ENCODE measurements at regions of chr15 and their contacts with region 1.

Region 1: GRCh38 chr15:66931768-66932633 is 133.4 kb upstream of the SMAD3 start:
- DNase-seq: peak; percentile 83
- ATAC-seq: peak; percentile 97
- H3K4me3 ChIP-seq: peak overlapping the region in 1 of 2 experiments; percentile 23; a peak in 2 of 4 replicates
- H3K27ac ChIP-seq: peak overlapping the region; percentile 100
- H3K4me1 ChIP-seq: peaks cover 39% of the 10 kb centered on the region
- H3K27me3 ChIP-seq: no peaks in the 10 kb centered on the region
- CTCF ChIP-seq: no peak

Region 2: GRCh38 chr15:66830358-66830757 is 101.6 kb before region 1 on chr15:
- CTCF ChIA-PET with region 1: no interaction called
- POLR2A ChIA-PET with region 1: no interaction called
- in situ Hi-C with region 1: no loop called
- intact Hi-C with region 1: no loop called
- DNase-seq: no peak
- ATAC-seq: peak; percentile 83
- H3K4me3 ChIP-seq: no peak overlapping the region
- H3K27ac ChIP-seq: peak overlapping the region; percentile 64
- H3K4me1 ChIP-seq: peaks cover 9% of the 10 kb centered on the region
- H3K27me3 ChIP-seq: no peaks in the 10 kb centered on the region
- CTCF ChIP-seq: no peak

Region 3: DNA sequence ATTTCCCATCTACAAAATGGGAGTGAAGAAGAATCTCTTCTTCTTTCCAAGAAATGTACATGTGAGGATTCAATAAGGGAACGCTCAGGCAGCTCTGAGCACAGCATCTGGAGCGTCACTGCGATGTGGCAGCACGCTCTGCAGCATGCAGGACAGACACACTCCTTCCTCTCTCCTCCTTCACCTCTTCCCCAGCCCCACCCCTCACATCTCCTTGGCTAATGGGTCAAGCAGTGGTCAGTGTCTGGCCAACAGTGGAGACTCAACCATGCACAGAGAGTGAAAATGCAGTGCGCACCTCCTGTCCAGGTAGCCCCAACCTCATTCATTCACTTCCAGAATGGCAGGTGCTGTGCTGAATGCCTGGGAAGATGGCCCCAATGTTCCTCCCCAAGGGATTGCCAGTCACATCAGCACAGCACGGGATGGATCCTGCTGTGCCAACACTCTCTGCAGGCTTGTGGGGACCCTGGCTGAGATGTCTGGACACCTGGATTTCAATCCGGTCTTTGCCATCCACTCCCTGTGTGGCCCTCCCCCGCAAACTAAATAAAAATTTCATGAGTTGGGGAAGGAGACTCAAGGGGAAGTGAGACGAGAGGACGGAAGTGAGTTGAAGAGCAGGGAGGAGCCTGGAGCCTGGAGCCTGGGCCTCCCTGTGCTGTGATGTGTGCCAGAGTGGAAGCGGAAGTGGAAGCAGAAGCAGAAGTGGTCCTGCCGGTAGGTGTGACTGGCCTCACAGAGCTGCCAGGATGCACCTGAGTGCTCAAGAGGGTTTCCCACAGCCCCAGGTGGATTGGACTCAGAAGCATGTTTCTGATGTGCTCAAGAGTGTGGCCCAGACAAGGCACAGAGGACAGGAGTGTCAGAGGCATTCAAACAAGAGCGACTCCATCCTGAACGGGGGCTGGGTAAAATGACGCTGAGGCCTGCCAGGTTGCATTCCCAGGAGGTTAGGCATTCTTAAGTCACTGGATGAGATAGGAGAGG is 66.1 kb before region 1 on chr15:
- CTCF ChIA-PET with region 1: no interaction called
- POLR2A ChIA-PET with region 1: no interaction called
- in situ Hi-C with region 1: no loop called
- intact Hi-C with region 1: no loop called
- DNase-seq: no peak
- ATAC-seq: no peak
- H3K4me3 ChIP-seq: no peak overlapping the region
- H3K27ac ChIP-seq: peak overlapping the region; percentile 90
- H3K4me1 ChIP-seq: peaks cover 34% of the 10 kb centered on the region
- H3K27me3 ChIP-seq: no peaks in the 10 kb centered on the region
- CTCF ChIP-seq: no peak

Region 4: GRCh38 chr15:66883322-66883911 is 48.6 kb before region 1 on chr15:
- CTCF ChIA-PET with region 1: no interaction called
- POLR2A ChIA-PET with region 1: interaction called, 3 read pairs
- in situ Hi-C with region 1: no loop called
- intact Hi-C with region 1: loop called (anchors 5 kb)
- DNase-seq: peak; percentile 99
- ATAC-seq: peak; percentile 90
- H3K4me3 ChIP-seq: no peak overlapping the region
- H3K27ac ChIP-seq: peak overlapping the region; percentile 98
- H3K4me1 ChIP-seq: peaks cover 60% of the 10 kb centered on the region
- H3K27me3 ChIP-seq: no peaks in the 10 kb centered on the region
- CTCF ChIP-seq: no peak

Measured in Panc1 (cell line).